Right ventricle myocardium inferior (tissue), 1 donor: ENCODE measurements at regions of chr5 and their contacts with region 1.

Region 1: GRCh38 chr5:132820162-132820754 is 7.2 kb downstream of the SOWAHA start:
- DNase-seq: peak; percentile 94
- ATAC-seq: peak; percentile 84

Region 2: DNA sequence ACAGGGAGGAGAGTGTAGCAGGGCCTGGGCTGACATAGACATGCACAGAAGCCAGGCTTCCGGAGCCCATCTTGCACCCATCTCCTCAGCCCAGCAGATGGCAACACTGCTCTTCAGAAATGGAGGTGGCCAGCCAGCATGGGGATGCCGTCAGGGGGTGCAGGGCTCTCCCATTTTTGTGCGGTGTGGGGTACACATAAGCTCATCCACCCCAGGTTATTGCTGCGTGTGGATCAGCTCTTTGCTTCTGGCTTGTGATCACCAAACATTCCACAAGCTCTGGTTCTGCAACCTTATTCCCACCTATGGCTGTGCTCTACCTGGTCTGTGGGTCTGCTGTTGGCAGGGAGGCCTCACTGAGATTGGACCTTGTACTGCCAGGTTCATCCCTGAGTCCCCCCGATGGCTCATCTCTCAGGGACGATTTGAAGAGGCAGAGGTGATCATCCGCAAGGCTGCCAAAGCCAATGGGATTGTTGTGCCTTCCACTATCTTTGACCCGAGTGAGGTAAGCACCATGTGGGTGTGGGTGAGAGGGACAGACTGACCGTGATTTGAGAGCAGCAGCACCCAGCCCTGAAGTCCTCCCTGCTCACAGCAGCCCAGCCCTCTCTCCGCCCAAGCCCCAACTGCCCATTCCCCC is 433.5 kb before region 1 on chr5:
- intact Hi-C with region 1: loop called (anchors 2 kb)
- DNase-seq: peak; percentile 88
- ATAC-seq: peak; percentile 84

Region 3: GRCh38 chr5:132526290-132526973 is 293.8 kb before region 1 on chr5:
- intact Hi-C with region 1: loop called (anchors 5 kb)
- DNase-seq: peak; percentile 53
- ATAC-seq: peak; percentile 83

Region 4: GRCh38 chr5:132674671-132675506 is 145.4 kb before region 1 on chr5:
- intact Hi-C with region 1: no loop called
- DNase-seq: no peak
- ATAC-seq: no peak

Region 5: GRCh38 chr5:132736853-132737833 is 83.1 kb before region 1 on chr5 and contains the start of gene KIF3A:
- intact Hi-C with region 1: loop called (anchors 2 kb)
- DNase-seq: peak; percentile 99
- ATAC-seq: peak; percentile 100
- total RNA-seq, gene KIF3A: 10.2 TPM

Region 6: DNA sequence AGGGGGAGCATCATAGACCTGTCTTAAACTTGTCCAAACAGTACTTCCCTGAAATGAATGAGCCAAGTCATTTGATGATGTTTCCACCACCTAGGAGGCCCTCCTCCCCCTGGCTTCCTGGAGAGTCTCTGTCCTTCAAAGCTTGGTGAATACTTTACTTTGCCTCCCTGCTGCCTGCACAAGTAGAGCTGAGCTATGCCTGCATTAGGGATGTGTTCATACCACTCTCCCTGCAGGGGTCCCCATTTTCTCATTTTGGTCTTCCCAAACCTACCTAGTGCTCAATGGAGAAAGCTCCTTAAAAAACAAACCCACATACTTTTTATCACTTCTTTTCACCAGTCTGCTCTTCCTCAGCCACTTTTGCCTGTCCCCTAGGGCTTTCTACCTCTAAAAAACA is 65.3 kb before region 1 on chr5:
- intact Hi-C with region 1: loop called (anchors 5 kb)
- DNase-seq: no peak
- ATAC-seq: no peak

Region 7: DNA sequence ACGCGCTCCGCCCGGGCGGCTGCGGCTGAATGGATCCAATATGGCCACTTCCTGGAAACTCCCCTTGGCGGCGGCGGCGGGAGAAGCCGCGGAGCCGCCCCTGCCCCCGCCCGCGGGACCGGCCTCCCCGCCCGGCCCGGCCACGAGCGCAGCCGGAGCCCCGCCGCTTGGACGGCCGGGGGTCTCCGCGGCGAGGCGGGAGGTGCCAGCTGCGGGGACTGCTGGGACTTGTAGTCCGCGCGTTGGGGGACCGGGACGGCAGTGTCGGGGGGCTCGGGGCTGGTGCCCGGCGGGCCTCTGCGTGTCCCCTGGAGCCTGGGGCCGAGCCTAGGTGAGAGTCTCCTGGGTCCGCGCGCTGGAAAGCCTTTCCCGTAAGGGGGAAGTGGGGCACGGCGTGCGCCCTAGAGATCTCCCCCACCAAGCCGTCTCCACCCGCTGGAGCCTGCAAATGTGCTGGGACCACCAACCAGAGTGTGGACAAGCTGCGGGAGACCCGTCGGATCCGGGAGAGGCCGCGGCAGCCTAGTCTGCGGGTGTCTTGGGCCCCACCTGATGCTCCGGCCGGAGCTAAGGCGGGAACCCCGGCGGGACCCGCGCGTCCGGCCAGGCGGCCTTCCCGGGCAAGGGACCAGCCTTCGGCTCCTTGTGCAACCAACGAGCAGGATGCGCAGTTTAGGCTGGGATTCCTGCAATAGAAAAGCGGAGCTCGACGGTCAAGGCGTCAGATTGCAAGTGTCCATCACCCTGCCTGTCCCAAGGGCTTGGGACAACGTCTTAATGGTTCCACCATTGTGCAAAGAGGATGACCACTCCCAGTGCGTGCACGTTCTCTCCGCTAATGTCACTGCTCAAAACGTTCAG is 42.8 kb before region 1 on chr5 and contains the start of gene SEPTIN8:
- intact Hi-C with region 1: loop called (anchors 5 kb)
- DNase-seq: peak; percentile 76
- ATAC-seq: peak; percentile 62
- total RNA-seq, gene SEPTIN8: 28.5 TPM

Region 8: DNA sequence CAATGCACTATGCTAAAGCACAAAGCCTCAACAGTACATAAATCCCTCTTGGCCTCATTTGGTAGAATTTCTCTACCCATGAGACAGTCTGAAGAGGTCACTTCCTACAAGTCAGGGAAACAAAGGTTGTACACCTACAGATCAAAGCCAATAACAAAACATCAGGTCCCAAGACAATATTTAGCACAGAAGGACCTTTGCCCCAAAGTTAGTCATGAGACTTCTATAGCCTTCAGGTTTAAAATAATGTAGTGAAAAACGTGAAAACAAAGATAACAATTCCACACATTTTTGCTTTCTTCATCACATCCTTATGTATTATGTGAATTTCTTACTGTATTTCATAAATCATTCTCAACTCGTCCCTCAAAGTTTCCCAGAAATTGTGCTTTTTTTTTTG is 127.4 kb after region 1 on chr5:
- intact Hi-C with region 1: no loop called
- DNase-seq: no peak
- ATAC-seq: no peak